ENCODE measurements at regions of chr20 and their contacts with region 1.

Region 1: GRCh38 chr20:60331688-60332300 is 373.6 kb downstream of the CDH26 start:
- DNase-seq: no peak
- H3K4me3 ChIP-seq: no peak overlapping the region
- CTCF ChIP-seq: no peak
- POLR2A ChIP-seq: no peak

Region 2: DNA sequence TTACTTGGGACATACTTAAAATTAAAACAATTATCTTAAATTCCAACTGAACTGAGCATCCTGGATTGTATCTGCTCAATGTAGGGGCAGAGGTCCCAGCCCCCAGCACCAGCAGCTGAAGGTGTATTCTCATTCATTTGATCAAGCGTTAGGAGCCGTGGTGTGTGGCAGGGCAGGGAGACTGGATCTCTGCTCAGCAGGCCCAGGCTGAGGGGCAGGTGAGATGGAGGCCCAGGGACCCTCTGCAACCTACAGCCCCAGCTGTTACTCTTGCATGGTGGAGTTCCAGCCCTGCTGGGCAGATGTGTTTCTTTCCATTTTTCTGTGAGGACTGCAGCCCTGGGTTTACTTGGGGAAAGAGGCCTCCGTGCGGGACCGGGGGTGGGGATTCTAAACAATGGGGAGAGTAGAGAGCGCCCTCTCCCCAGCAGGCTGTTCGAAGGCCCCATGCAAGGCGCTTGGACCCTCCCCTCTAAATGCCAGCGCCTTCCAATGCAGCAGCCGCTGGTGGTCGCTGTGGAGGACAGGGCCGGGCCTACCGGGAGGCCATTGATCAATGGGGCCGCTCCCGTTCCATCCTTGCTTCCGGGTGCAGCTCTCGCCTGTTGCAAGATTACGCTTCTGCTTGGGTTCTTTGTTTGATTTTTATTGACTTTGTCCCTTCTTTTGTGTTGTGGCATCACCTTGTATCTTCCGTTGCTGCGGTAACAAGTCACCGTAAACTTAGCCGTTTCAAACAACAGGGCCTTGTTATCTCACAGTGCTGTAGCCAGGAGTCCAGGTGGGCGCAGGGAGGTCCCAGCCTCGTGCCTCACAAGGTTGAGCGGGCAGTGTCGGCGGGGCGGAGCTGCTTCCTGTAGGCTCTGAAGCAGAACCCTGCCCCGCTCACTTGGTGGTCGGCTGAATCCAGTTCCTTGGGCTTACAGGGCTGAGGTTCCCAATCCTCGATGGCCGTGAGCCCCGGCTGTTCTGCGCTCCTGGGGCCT is 862.2 kb before region 1 on chr20:
- intact Hi-C with region 1: loop called (anchors 10 kb)
- DNase-seq: no peak
- H3K4me3 ChIP-seq: no peak overlapping the region
- CTCF ChIP-seq: no peak
- POLR2A ChIP-seq: no peak